ENCODE measurements at regions of chr3 and their contacts with region 1.

Region 1: DNA sequence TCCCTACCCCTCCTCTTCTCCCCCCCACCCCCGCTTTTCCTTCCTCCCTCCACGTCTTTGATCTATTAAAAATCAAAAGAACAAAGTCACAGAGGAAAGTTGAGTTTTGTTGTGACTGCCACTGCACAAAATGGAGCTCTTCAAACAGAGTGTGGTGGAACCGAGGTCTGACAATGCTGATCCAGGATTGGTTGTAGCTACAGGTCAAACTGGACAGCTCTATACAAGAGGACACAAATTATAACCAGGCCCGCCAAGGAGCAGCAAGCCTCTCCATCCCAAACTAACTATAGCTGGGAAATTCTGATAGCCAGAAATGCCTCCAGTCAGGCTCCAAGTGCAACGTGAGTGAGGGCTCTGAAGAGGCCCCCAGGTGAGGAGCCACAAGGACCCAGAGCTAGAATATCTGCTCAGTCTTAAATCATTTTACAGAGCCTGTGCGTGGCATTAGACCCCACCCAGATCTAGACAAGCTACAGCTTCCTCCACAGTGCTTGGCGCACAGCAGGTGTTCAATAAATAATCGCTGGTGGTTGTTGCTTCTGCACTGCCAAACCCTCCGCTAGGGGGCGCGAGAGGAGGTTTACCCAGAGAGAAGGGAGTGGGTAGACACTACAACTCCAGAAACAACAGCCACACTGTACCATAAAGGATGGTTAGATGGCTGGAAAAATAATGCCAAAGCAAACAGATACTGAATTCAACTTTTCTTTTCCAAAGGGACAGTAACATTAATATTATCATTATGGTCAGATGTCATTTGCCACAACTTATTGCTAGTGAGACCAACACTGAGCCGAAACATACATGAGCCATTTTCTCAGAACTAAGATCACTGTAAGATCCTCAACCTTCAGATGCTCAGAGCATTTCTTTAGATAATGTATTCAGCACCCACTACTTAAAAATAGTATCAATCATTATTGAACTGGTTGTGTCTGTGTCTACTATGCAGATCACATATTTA is 44.6 kb downstream of the ZIC4 start:
- DNase-seq: peak; percentile 96
- ATAC-seq: peak; percentile 50
- H3K4me3 Mint-ChIP-seq: peak overlapping the region; percentile 61
- H3K27ac Mint-ChIP-seq: no peak overlapping the region
- H3K4me1 Mint-ChIP-seq: peaks cover 48% of the 10 kb centered on the region
- H3K27me3 Mint-ChIP-seq: peaks cover 93% of the 10 kb centered on the region
- CTCF ChIP-seq: peak; percentile 98

Region 2: DNA sequence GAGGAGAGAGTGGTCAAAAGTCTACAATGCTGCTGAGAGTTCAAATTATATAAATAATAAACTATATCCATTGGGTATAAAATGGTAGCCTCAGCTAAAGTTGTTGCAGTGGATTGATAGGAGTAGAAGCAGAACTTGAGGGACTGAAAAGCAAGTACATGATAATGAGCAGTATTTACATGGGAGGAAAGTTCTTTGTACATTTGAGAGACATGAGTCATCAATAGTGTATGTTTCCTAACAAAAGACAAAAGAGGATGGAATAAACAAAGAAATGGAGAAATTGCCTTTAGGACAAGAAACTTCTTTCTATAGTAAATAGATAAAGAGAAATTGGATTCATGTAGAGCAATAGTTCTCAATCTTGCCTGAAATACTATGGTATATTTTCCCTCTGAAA is 646.6 kb before region 1 on chr3:
- CTCF ChIA-PET with region 1: no interaction called
- POLR2A ChIA-PET with region 1: no interaction called
- DNase-seq: no peak
- ATAC-seq: no peak
- H3K4me3 Mint-ChIP-seq: no peak overlapping the region
- H3K27ac Mint-ChIP-seq: no peak overlapping the region
- H3K4me1 Mint-ChIP-seq: peaks cover 3% of the 10 kb centered on the region; the same call in 1 of the 2 replicates
- H3K27me3 Mint-ChIP-seq: no peaks in the 10 kb centered on the region
- CTCF ChIP-seq: no peak

Region 3: DNA sequence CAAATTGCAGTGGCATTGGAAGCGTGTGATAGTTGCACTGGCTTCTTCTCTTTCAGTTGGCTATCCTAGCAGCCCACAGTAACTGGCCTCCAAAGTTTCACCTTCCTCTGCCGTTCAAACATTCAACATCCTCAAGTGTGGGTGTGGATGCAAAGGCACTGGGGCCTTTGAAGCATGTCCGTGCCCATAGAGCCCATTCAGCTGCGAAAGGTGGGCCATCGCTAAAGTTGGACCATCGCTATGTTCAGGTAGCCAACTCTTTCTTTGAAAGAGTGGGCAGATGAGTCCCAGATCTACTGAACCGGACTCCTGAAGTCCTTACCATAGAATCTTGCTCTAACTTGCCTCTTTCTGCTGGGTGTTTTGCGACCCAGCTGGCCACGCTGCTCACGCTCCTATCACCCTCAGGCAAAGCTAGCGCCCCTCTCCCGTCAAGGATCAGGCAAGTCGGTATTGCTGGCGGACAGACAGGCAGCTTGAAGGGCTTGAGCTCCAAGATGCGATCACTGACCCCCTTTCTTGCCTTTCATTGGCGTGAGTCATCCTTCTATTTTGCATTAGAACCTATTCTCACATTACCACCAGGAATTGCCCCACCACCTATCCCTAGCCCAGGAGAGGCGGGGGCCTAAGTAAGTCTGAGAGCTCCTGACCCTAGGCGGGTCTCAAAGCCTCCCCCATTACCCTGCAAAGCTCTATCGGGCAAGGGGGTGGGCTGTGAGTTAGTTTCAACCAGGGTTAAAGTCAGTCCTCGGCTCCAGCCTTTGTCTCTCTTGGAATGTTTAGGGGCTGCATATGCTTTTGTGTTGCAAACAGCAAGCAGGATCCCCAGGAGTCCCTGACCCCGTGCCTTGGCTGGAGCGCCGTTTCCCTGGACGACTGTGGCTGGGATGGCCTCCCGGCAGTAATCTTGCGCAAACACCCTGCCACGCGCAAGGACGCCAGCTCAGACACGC is 16.0 kb after region 1 on chr3:
- CTCF ChIA-PET with region 1: interaction called, 70 read pairs
- POLR2A ChIA-PET with region 1: interaction called, 4 read pairs
- DNase-seq: peak; percentile 76
- ATAC-seq: peak; percentile 93
- H3K4me3 Mint-ChIP-seq: peak overlapping the region; percentile 85
- H3K27ac Mint-ChIP-seq: peak overlapping the region; percentile 95
- H3K4me1 Mint-ChIP-seq: peaks cover 70% of the 10 kb centered on the region
- H3K27me3 Mint-ChIP-seq: peaks cover 97% of the 10 kb centered on the region
- CTCF ChIP-seq: no peak

Region 4: GRCh38 chr3:147391781-147392624 is 30.3 kb after region 1 on chr3:
- CTCF ChIA-PET with region 1: interaction called, 32 read pairs
- POLR2A ChIA-PET with region 1: interaction called, 9 read pairs
- DNase-seq: peak; percentile 89
- ATAC-seq: peak; percentile 57
- H3K4me3 Mint-ChIP-seq: peak overlapping the region; percentile 78
- H3K27ac Mint-ChIP-seq: peak overlapping the region; percentile 97
- H3K4me1 Mint-ChIP-seq: peaks cover 73% of the 10 kb centered on the region
- H3K27me3 Mint-ChIP-seq: peaks cover 98% of the 10 kb centered on the region
- CTCF ChIP-seq: no peak

Region 5: DNA sequence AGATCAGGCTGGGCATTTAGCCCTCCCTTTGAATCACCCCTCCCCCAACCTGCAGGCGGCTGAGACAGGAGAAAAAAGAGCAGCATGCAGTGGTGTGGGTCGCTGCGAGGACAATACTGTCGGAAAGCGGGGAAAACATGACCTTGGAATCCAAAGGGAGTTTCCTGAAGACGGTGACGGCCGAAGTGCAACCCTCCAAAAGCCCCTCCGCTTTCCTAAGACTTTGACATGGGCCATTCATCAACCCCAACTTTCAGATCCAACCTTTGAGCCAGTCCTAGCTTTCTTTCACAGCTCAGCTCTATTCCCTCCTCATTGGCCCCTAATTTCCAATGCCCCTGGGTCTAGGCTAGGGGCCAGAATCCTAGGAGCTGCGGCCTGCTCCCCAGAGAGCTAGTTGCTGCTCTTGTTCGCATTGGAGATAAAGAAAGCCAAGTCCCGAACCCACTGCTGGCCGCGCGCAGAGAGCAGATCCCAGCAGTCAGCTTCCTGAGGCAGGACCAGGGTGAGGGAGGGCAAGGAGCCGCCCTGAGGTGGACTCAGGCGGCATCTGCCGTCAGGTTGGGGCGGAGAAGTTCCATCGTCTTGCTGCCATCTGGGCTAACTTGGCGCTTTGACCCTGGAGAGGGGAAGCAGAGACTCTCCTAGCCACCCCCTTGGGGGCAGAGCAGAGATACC is 43.6 kb after region 1 on chr3:
- CTCF ChIA-PET with region 1: interaction called, 13 read pairs
- POLR2A ChIA-PET with region 1: no interaction called
- DNase-seq: peak; percentile 44
- ATAC-seq: peak; percentile 14
- H3K4me3 Mint-ChIP-seq: peak overlapping the region; percentile 56
- H3K27ac Mint-ChIP-seq: no peak overlapping the region
- H3K4me1 Mint-ChIP-seq: peaks cover 85% of the 10 kb centered on the region
- H3K27me3 Mint-ChIP-seq: peaks cover 100% of the 10 kb centered on the region
- CTCF ChIP-seq: no peak

Region 6: DNA sequence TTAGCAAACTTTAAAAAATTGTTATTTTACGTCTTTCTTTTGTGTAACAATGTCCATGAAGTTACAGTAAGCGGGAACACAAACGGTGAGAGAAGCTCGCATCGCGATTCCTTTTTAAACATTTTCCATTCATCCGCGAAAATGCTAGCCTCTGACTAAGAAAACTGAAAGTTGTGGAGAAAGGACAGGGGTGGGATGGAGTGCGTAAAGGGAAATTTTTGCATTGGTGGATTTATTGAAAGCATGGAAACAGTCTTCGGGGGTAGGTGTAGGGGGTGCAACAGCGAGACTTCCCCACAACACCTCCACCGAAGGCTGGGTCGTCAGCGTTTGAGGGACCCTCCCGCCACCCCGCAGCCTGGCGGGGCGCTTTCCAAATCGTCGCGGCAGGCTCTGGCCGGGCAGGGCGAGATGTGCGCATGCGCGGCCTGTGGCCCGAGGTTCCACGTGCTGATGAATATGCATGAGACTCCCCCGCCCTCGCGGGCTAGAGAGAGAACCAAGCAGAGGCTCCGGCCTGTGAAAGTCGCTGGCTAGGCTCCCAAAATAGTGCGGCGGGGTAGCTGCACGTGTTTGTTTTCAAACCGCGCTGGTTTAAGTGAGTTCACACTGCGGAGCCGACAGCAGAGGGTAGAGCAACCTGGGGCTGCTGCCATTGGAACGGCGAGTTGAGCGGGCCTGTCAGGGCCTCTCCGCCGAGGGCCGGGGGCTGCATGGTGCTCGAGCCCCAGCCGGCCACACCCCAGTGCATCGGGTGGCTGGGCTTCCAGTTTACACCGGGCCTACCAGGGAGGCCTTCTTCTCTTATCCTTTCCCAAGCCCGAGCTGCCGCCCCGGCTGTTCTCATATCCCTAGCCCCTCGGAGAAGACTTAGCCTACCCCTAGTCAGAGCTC is 57.3 kb after region 1 on chr3:
- CTCF ChIA-PET with region 1: interaction called, 13 read pairs
- POLR2A ChIA-PET with region 1: no interaction called
- DNase-seq: peak; percentile 94
- ATAC-seq: peak; percentile 58
- H3K4me3 Mint-ChIP-seq: peak overlapping the region; percentile 73
- H3K27ac Mint-ChIP-seq: peak overlapping the region; percentile 72; the same call in 1 of the 2 replicates
- H3K4me1 Mint-ChIP-seq: peaks cover 91% of the 10 kb centered on the region
- H3K27me3 Mint-ChIP-seq: peaks cover 100% of the 10 kb centered on the region
- CTCF ChIP-seq: no peak

Region 7: DNA sequence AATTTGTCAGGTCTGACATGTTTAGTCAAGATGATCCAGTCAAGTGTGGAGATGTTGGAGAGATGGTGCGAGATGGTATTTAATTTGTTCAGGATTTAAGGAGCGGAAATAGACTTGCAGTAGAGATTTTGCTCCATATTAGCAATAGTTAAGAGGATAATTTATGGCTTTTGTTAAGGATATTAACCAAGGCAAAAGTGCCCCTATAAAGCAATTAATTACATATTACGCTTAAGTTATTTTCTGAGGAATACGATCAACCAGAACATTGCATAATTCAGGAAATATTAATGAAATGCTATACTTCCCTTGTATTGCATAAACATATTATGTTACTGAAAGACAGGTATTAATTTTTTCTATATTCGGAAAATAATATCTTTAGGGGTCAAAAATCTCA is 131.3 kb after region 1 on chr3:
- CTCF ChIA-PET with region 1: no interaction called
- POLR2A ChIA-PET with region 1: no interaction called
- DNase-seq: no peak
- ATAC-seq: no peak
- H3K4me3 Mint-ChIP-seq: no peak overlapping the region
- H3K27ac Mint-ChIP-seq: no peak overlapping the region
- H3K4me1 Mint-ChIP-seq: no peaks in the 10 kb centered on the region
- H3K27me3 Mint-ChIP-seq: no peaks in the 10 kb centered on the region
- CTCF ChIP-seq: no peak